Stomach (tissue), 19 donors: ENCODE measurements at regions of chr3 and their contacts with region 1.

Region 1: GRCh38 chr3:194134757-194135528 is 1.0 kb upstream of the HES1 start:
- DNase-seq: peak; percentile 93 to 99
- H3K4me3 ChIP-seq: peak overlapping the region; percentile 62 to 69 (median 66)
- H3K27ac ChIP-seq: peak overlapping the region; percentile 98 to 99 (median 98)
- H3K4me1 ChIP-seq: peaks cover 45 to 83% (median 78%) of the 10 kb centered on the region in 4 donors
- H3K27me3 ChIP-seq: peaks cover 0 to 24% (median 0%) of the 10 kb centered on the region in 3 donors
- CTCF ChIP-seq: no peak
- EP300 ChIP-seq: peak; percentile 40
- POLR2A ChIP-seq: peak in 2 of 4 donors; percentile 33 to 48

Region 2: DNA sequence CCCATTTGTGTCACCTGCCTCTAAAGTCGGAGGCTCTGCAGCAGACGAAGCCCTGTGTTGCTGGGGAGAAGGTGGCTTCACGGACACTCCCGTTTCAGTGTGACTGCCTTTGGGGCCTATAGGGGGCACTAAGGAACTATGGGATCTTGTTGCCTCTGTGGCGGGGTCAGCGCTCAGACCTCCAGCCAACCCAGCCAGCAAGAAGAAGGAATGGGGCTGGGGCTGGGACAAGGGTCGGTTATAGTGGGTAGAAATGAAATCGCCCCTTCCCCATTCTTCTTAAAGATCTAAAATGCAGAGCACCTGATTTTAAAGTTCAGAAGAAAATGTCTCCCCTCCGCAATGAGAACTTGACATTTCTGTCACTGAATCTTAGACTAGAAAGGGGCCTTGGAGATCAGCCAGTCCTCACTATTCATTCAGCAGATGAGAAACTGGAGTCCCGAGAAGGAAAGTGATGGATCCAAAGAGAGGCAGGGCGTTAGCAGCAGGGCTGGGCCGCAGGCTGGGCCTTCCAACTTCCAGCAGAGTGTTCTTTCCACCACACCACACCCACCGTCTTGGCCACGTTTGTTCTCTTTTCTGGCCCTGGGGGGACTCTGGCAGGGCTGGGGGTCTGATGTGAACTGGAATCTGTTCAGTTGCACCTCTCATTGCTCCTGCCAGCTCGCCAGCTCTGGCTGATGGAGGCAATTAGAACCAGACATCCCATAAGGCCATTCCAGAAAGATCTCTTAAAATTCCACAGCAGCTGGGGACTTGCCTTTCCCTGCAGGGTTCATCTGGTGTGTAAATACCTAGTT is 346.6 kb before region 1 on chr3:
- intact Hi-C with region 1: loop called (anchors 5 kb)
- DNase-seq: peak; percentile 65 to 92
- H3K4me3 ChIP-seq: no peak overlapping the region
- H3K27ac ChIP-seq: peak overlapping the region in 4 of 5 donors; percentile 2 to 47 (median 14)
- H3K4me1 ChIP-seq: peaks cover 0 to 23% (median 22%) of the 10 kb centered on the region in 4 donors
- H3K27me3 ChIP-seq: no peaks in the 10 kb centered on the region
- CTCF ChIP-seq: peak in 6 of 7 experiments; percentile 13 to 80 (median 72)
- EP300 ChIP-seq: no peak
- POLR2A ChIP-seq: no peak

Region 3: GRCh38 chr3:193997228-193998122 is 137.5 kb before region 1 on chr3:
- intact Hi-C with region 1: loop called (anchors 5 kb)
- DNase-seq: peak in 1 of 2 donors; percentile 61
- H3K4me3 ChIP-seq: no peak overlapping the region
- H3K27ac ChIP-seq: peak overlapping the region in 4 of 5 donors; percentile 1 to 69 (median 46)
- H3K4me1 ChIP-seq: peaks cover 8 to 24% (median 20%) of the 10 kb centered on the region in 4 donors
- H3K27me3 ChIP-seq: no peaks in the 10 kb centered on the region
- CTCF ChIP-seq: no peak
- EP300 ChIP-seq: no peak
- POLR2A ChIP-seq: no peak

Region 4: GRCh38 chr3:194344012-194344411 is 209.1 kb after region 1 on chr3:
- intact Hi-C with region 1: no loop called
- DNase-seq: peak; percentile 84 to 89
- H3K4me3 ChIP-seq: no peak overlapping the region
- H3K27ac ChIP-seq: no peak overlapping the region
- H3K4me1 ChIP-seq: no peaks in the 10 kb centered on the region
- H3K27me3 ChIP-seq: no peaks in the 10 kb centered on the region
- CTCF ChIP-seq: peak in 5 of 7 experiments; percentile 66 to 92 (median 85)
- EP300 ChIP-seq: no peak
- POLR2A ChIP-seq: no peak

Region 5: DNA sequence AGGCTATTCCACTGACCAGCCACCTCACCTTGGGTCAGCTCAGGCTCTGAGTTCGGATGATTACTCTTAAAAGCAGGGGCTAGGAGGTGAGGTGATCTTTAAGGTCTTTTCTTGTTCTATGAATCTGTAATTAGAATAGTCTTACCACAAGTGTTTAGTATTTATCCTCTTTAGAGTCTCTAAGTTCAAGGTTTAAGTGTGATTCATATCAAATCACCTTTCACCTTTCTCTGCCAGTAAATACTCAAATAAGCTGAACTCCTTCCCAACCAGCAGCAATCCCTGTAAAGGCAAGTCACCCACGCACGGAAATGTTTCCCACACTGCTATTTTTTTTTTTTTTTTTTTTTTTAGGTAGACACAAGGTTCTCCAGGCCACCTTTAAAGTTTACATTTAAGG is 512.8 kb after region 1 on chr3:
- intact Hi-C with region 1: no loop called
- DNase-seq: no peak
- H3K4me3 ChIP-seq: no peak overlapping the region
- H3K27ac ChIP-seq: no peak overlapping the region
- H3K4me1 ChIP-seq: no peaks in the 10 kb centered on the region
- H3K27me3 ChIP-seq: no peaks in the 10 kb centered on the region
- CTCF ChIP-seq: no peak
- EP300 ChIP-seq: no peak
- POLR2A ChIP-seq: no peak